Right ventricle myocardium superior (tissue), 1 donor: ENCODE measurements at regions of chr4 and their contacts with region 1.

Region 1: GRCh38 chr4:22410645-22411247 is 105.1 kb downstream of the ADGRA3 start:
- DNase-seq: no peak
- ATAC-seq: no peak

Region 2: DNA sequence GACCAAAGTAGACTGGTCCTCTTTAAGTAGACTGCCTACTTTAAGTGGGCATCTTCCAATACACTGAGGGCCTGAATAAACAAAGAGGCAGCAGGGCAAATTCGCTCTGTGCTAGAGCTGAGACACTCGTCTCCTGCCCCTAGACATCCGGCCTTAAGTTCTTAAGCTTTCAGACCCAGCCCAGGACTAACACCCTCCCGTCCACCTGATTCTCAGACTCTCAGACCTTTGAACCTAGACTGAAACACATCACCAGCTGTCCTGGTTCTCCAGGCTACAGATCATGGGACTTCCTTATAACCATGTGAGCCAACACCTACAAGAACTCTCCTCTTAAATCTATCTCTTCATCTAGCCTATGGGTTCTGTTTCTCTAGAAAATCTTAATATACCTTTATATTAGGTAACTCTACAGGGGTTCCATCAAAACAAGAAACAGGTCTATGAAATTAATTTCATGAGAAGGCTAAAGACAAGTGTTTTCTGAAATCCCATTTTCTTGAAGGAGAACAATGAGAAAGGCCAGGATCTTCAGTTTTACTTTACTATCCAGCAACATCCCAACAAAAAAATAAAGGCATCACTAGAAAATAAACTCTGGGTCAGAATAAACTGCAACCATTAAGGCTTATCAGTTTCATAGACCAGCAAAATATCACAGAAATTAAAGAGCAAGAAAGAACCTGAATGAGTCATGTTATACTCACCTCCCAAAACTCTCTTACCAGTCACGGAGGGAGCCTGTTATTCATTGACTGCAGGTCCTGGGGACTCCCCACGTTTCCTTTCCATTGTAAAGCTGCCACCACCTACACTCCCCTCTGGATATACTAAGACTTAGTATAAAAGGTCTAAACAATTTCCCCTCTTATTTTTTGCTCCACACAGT is 90.3 kb after region 1 on chr4:
- intact Hi-C with region 1: no loop called
- DNase-seq: no peak
- ATAC-seq: no peak

Region 3: GRCh38 chr4:22607382-22607781 is 196.6 kb after region 1 on chr4:
- intact Hi-C with region 1: loop called (anchors 10 kb)
- DNase-seq: peak; percentile 50
- ATAC-seq: peak; percentile 97

Region 4: GRCh38 chr4:22688236-22688635 is 277.5 kb after region 1 on chr4:
- intact Hi-C with region 1: loop called (anchors 2 kb)
- DNase-seq: no peak
- ATAC-seq: no peak